Common myeloid progenitor, CD34-positive (primary cell): ENCODE measurements at regions of chr17 and their contacts with region 1.

Region 1: GRCh38 chr17:74736513-74737298 is at the start of gene RAB37:
- DNase-seq: peak; percentile 89 to 97 (median 95)
- H3K4me3 ChIP-seq: peak within 1 kb of the TSS; percentile 61 to 88 (median 70)
- H3K27ac ChIP-seq: peak within 1 kb of the TSS; percentile 81 to 89
- H3K4me1 ChIP-seq: peaks cover 6 to 61% (median 55%) of the 10 kb centered on the region in 4 experiments
- H3K27me3 ChIP-seq: no peaks in the 10 kb centered on the region

Region 2: DNA sequence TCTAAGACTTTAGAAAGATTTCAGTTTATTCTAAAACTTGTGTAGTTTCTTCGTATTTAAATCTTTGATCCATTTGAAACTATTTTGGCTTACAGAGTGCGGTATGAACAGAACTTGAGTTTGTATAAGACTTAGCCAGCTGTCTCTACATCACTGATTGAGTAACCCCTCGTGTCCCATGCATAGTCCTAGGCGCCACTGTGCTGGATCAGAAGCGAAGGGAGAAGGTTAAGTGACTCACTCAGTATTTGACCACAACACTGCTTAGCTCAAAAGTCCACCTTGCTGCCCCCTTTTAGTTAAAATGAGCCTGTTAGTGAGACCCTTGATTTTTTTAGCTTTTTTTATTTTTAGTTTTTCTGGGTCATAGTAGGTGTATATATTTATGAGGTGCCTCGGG is 233.8 kb before region 1 on chr17:
- CTCF ChIA-PET with region 1: no interaction called
- POLR2A ChIA-PET with region 1: no interaction called
- DNase-seq: no peak
- H3K4me3 ChIP-seq: no peak overlapping the region
- H3K27ac ChIP-seq: no peak overlapping the region
- H3K4me1 ChIP-seq: no peaks in the 10 kb centered on the region
- H3K27me3 ChIP-seq: no peaks in the 10 kb centered on the region

Region 3: DNA sequence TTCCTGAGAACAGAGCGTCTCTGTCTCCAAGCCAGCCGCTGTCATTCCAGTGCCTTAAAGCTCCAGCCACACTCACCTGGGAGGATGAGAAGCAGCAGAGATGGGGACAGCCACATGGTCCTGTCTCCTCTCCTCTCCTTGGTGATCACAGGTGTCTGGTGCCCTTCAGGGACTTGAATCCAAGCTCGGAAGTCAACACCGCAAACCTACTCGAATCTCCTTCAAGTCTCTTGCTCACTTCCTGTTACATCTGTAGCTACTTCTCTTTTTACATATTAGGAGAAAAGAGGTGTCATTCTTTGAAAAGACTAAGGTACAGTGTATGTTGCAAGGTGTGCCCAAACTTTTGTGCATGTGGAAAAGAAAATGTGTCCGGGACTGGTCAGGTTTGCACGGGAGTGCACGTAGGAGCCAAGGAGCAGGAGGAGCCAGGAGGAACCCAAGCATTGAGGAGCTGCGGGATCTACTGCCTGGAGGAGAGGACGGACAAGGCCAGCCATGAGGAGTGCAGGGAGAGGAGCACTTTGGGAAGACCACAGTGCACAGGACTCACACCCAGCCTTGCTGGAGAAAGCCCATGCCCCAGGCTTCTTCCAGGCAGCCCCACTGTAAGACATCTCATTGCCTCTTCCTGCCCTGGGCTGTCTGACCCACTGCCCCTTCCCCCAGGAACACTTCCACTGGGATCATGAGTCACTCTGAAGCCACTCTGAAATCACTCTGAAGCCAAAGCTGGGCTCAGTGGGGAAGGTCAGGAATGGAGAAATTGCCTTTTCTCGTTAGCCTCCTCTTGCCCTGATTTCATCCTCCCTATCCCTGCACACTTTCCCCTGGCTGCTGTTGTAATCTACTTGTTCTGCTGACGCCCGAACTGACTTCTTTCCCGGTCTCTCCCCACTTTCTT is 144.4 kb before region 1 on chr17 and contains the start of gene CD300LD:
- CTCF ChIA-PET with region 1: no interaction called
- POLR2A ChIA-PET with region 1: no interaction called
- DNase-seq: peak; percentile 50 to 88 (median 80)
- H3K4me3 ChIP-seq: no peak within 1 kb of the TSS
- H3K27ac ChIP-seq: no peak within 1 kb of the TSS
- H3K4me1 ChIP-seq: peaks cover 0 to 13% (median 8%) of the 10 kb centered on the region in 4 experiments
- H3K27me3 ChIP-seq: no peaks in the 10 kb centered on the region

Region 4: GRCh38 chr17:74647871-74648672 is 88.6 kb before region 1 on chr17:
- CTCF ChIA-PET with region 1: interaction called, 13 read pairs
- POLR2A ChIA-PET with region 1: no interaction called
- DNase-seq: no peak
- H3K4me3 ChIP-seq: no peak overlapping the region
- H3K27ac ChIP-seq: no peak overlapping the region
- H3K4me1 ChIP-seq: peaks cover 0 to 2% (median 0%) of the 10 kb centered on the region in 4 experiments
- H3K27me3 ChIP-seq: peaks cover 0 to 27% (median 12%) of the 10 kb centered on the region in 5 experiments

Region 5: GRCh38 chr17:74671031-74671771 is 65.5 kb before region 1 on chr17:
- CTCF ChIA-PET with region 1: interaction called, 61 read pairs
- POLR2A ChIA-PET with region 1: interaction called, 4 read pairs
- DNase-seq: peak; percentile 81 to 93 (median 91)
- H3K4me3 ChIP-seq: no peak overlapping the region
- H3K27ac ChIP-seq: no peak overlapping the region
- H3K4me1 ChIP-seq: peaks cover 0 to 3% (median 3%) of the 10 kb centered on the region in 4 experiments
- H3K27me3 ChIP-seq: peaks cover 0 to 29% (median 19%) of the 10 kb centered on the region in 5 experiments

Region 6: GRCh38 chr17:74697515-74697914 is 39.2 kb before region 1 on chr17:
- CTCF ChIA-PET with region 1: interaction called, 15 read pairs
- POLR2A ChIA-PET with region 1: no interaction called
- DNase-seq: no peak
- H3K4me3 ChIP-seq: no peak overlapping the region
- H3K27ac ChIP-seq: no peak overlapping the region
- H3K4me1 ChIP-seq: peaks cover 0 to 8% (median 0%) of the 10 kb centered on the region in 4 experiments
- H3K27me3 ChIP-seq: no peaks in the 10 kb centered on the region

Region 7: DNA sequence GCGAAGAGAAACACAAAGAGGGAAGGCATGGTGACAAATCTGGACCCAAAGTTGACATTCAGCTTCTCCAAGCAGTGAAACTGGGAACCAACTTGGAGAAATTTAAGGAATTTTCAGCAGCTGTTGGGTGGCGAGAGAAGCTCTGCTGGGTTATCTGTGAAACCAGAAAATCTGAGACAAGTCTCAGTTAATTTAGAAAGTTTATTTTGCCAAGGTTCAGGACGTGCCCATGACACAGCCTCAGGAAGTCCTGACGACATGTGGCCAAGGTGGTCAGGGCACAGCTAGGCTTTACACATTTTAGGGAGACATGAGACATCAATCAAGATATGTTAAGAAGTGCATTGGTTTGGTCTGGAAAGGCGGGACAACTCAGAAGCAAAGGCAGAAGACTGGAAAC is 12.8 kb before region 1 on chr17:
- CTCF ChIA-PET with region 1: interaction called, 33 read pairs
- POLR2A ChIA-PET with region 1: interaction called, 4 read pairs
- DNase-seq: peak in 1 of 3 donors; percentile 34
- H3K4me3 ChIP-seq: no peak overlapping the region
- H3K27ac ChIP-seq: no peak overlapping the region
- H3K4me1 ChIP-seq: peaks cover 0 to 5% (median 0%) of the 10 kb centered on the region in 4 experiments
- H3K27me3 ChIP-seq: no peaks in the 10 kb centered on the region

Region 8: GRCh38 chr17:74770498-74771318 is 34.0 kb after region 1 on chr17:
- CTCF ChIA-PET with region 1: interaction called, 38 read pairs
- POLR2A ChIA-PET with region 1: interaction called, 13 read pairs
- DNase-seq: peak; percentile 51 to 72 (median 66)
- H3K4me3 ChIP-seq: no peak overlapping the region
- H3K27ac ChIP-seq: no peak overlapping the region
- H3K4me1 ChIP-seq: peaks cover 4 to 16% (median 8%) of the 10 kb centered on the region in 4 experiments
- H3K27me3 ChIP-seq: no peaks in the 10 kb centered on the region

Region 9: DNA sequence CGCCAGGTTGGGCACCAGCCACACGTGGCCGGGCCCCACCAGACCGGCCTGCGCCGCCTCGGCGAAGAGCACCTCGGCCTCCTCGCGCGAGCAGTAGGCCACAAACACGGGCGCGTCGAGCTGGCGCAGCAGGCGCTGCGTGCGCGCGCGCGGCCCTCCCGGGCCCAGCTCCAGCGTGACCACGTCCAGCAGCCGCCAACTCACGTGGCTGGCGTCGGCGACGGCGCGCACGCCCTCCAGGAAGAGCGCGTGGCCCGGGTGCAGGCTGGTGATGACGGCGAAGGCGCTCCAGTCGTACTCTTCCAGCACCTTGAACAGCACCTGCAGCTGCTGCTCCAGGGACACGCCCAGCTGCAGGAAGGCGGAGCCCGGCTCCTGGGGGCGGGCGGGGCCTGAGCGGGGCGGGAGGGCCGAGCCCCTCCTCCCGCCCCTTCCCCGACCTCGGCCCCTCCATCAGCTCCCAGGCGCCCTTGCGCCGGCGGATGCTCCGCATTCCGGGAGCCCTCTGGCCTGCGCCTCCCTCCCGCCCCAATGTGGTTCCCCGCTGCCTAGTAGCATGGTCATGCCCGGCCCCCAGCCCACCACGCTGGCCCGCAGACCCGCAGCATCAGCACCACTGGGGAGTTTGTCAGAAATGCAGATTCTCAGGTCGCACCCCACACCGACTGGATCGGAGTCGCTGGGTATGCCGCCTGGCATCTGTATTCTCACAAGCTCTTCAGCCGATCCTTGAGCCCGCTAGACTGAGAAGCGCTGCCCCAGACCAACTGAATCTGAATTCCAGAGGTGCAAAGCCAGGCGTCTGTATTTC is 115.7 kb after region 1 on chr17:
- CTCF ChIA-PET with region 1: no interaction called
- POLR2A ChIA-PET with region 1: no interaction called
- DNase-seq: peak; percentile 36 to 79 (median 75)
- H3K4me3 ChIP-seq: peak overlapping the region in 3 of 7 experiments; percentile 1 to 38 (median 4)
- H3K27ac ChIP-seq: no peak overlapping the region
- H3K4me1 ChIP-seq: peaks cover 0 to 9% (median 7%) of the 10 kb centered on the region in 4 experiments
- H3K27me3 ChIP-seq: peaks cover 0 to 80% (median 22%) of the 10 kb centered on the region in 5 experiments